WTC11 (cell line): ENCODE measurements at regions of chr9 and their contacts with region 1.

Region 1: GRCh38 chr9:21252721-21253547 is 13.1 kb upstream of the IFNA14 start:
- DNase-seq: peak; percentile 21
- ATAC-seq: peak; percentile 79
- H3K4me3 Mint-ChIP-seq: no peak overlapping the region
- H3K27ac Mint-ChIP-seq: no peak overlapping the region
- H3K4me1 Mint-ChIP-seq: peaks cover 17% of the 10 kb centered on the region
- H3K27me3 Mint-ChIP-seq: peaks cover 34% of the 10 kb centered on the region
- CTCF ChIP-seq: peak; percentile 35

Region 2: GRCh38 chr9:21239911-21240310 is 13.0 kb before region 1 on chr9 and contains the start of gene IFNA14:
- CTCF ChIA-PET with region 1: interaction called, 25 read pairs
- POLR2A ChIA-PET with region 1: interaction called, 3 read pairs
- DNase-seq: no peak
- ATAC-seq: no peak
- H3K4me3 Mint-ChIP-seq: no peak within 1 kb of the TSS
- H3K27ac Mint-ChIP-seq: no peak within 1 kb of the TSS
- H3K4me1 Mint-ChIP-seq: no peaks in the 10 kb centered on the region
- H3K27me3 Mint-ChIP-seq: peaks cover 5% of the 10 kb centered on the region
- CTCF ChIP-seq: no peak
- total RNA-seq, gene IFNA14: not detected in 3 replicates

Region 3: GRCh38 chr9:21455320-21455719 is 202.4 kb after region 1 on chr9:
- CTCF ChIA-PET with region 1: interaction called, 12 read pairs
- POLR2A ChIA-PET with region 1: no interaction called
- DNase-seq: peak; percentile 25
- ATAC-seq: peak; percentile 97
- H3K4me3 Mint-ChIP-seq: no peak overlapping the region
- H3K27ac Mint-ChIP-seq: no peak overlapping the region
- H3K4me1 Mint-ChIP-seq: peaks cover 12% of the 10 kb centered on the region
- H3K27me3 Mint-ChIP-seq: peaks cover 5% of the 10 kb centered on the region
- CTCF ChIP-seq: 0 out of 2 replicates have a peak, but pooled peaks have one; percentile 31